Common myeloid progenitor, CD34-positive (primary cell): ENCODE measurements at regions of chr2 and their contacts with region 1.

Region 1: DNA sequence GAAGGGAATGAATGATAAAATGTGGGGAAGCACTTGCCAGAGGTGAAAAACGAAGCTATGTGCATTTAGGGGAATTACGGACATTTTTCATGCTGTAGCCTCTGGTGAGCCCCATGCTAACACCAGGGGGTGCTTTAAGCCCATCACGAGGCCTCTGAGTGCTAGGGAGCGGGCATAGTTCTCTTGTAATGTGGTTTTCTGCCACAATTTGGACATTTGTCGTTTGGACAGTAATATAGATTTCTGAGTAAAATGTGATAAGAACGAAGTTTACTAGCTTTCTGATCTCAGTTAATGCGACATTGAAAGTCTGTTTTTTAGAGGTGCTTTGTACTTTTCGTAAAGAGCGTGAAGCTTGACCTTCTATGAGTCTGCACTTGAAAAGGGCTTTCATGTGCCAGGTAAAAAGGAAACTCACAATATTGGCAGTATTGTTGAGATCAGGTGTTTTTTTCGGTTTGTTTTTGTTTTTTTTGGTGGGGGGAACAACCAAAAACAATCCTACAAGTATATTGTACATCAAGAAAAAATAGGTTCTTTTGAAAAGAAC is 50.6 kb downstream of the TRAF3IP1 start:
- DNase-seq: peak; percentile 65 to 87 (median 84)
- H3K4me3 ChIP-seq: no peak overlapping the region
- H3K27ac ChIP-seq: no peak overlapping the region
- H3K4me1 ChIP-seq: peaks cover 0 to 20% (median 0%) of the 10 kb centered on the region in 4 experiments
- H3K27me3 ChIP-seq: no peaks in the 10 kb centered on the region

Region 2: DNA sequence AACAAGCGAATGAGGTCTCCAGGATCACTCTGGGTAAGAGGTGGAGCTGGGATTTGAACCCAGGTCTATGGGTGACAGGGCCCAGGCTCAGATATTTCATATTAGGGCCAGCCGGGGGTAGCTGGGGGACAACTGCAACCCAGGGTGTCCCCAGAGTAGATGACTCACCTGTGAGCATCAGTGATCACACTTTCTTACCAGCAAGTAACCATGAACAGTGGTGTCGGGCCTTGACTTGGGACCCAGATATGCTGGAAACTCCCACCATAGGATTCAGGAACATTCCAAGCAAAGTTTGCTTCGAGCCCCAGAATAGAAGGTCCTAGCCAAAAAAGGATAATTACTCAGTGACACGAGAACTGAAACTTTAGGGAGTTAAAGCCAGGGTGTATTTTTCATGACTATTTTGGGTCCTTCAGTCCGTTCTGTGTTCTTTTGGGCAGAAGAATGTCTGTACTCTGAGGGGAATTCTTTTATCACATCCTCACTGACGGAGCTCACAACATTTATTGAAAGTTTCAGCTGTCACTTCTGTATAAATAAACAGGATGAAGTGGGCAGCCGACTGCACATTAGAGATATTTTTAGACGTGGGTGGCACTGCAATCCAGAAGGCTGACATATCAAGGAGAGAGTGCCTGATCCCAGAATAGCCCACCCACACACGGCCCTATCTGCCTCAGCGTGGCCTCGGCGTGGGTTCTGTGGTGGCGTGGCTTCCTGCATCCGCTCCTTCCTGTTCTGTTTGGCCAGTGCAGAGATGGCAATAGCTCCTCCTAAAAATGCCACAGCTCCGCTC is 465.9 kb before region 1 on chr2:
- CTCF ChIA-PET with region 1: no interaction called
- POLR2A ChIA-PET with region 1: no interaction called
- DNase-seq: peak; percentile 42 to 85 (median 76)
- H3K4me3 ChIP-seq: peak overlapping the region in 1 of 7 experiments; percentile 48
- H3K27ac ChIP-seq: peak overlapping the region; percentile 52 to 64
- H3K4me1 ChIP-seq: peaks cover 5 to 52% (median 35%) of the 10 kb centered on the region in 4 experiments
- H3K27me3 ChIP-seq: no peaks in the 10 kb centered on the region

Region 3: GRCh38 chr2:238433941-238434845 is 63.3 kb after region 1 on chr2:
- CTCF ChIA-PET with region 1: interaction called, 14 read pairs
- POLR2A ChIA-PET with region 1: interaction called, 3 read pairs
- DNase-seq: no peak
- H3K4me3 ChIP-seq: no peak overlapping the region
- H3K27ac ChIP-seq: no peak overlapping the region
- H3K4me1 ChIP-seq: no peaks in the 10 kb centered on the region
- H3K27me3 ChIP-seq: no peaks in the 10 kb centered on the region

Region 4: GRCh38 chr2:238462782-238463396 is 92.0 kb after region 1 on chr2:
- CTCF ChIA-PET with region 1: interaction called, 37 read pairs
- POLR2A ChIA-PET with region 1: interaction called, 4 read pairs
- DNase-seq: peak; percentile 50 to 75 (median 74)
- H3K4me3 ChIP-seq: no peak overlapping the region
- H3K27ac ChIP-seq: no peak overlapping the region
- H3K4me1 ChIP-seq: no peaks in the 10 kb centered on the region
- H3K27me3 ChIP-seq: peaks cover 0 to 6% (median 0%) of the 10 kb centered on the region in 5 experiments

Region 5: GRCh38 chr2:238585836-238586821 is 215.2 kb after region 1 on chr2:
- CTCF ChIA-PET with region 1: no interaction called
- POLR2A ChIA-PET with region 1: no interaction called
- DNase-seq: peak in 2 of 3 donors; percentile 4 to 16
- H3K4me3 ChIP-seq: no peak overlapping the region
- H3K27ac ChIP-seq: no peak overlapping the region
- H3K4me1 ChIP-seq: no peaks in the 10 kb centered on the region
- H3K27me3 ChIP-seq: peaks cover 0 to 2% (median 0%) of the 10 kb centered on the region in 5 experiments

Region 6: DNA sequence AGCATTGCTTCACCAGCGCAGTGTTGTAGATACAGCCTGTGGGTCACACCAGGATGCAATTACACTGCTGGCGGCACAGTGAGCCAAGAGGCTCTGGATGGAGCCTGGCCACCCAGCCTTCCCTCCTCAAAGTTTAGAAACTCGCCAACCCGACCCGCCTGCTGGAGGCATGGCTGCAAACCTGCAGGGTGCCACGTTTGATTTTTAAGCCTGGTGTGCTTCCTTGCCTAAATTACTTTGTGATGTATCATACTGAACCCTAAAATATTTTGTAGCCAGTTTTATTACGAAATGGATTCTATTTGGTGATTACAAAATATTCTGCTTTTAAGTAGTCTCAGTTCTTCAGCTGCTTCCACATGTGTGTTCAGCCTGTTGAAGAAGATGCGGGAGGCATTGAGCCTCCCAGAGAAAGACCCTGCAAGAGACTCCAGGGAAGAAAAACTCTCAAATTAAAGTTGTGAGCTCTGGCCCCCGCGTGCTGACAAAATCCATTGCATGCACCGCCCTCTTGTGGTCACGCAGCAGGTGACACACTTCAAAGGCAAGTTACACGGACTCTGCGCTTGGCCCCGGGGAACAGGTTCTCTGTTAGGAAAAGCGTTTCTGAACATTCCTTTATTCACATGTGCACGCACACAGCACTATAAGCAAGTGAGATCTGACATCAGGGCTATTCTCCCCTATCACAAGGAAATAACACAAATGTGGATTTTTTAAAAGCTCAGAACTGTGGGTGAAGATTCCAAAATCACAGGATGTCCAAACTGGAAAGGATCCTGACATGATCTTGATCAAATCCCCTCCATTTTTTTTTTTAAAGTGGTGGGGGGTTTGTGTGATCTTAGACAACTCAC is 414.0 kb after region 1 on chr2:
- CTCF ChIA-PET with region 1: interaction called, 11 read pairs
- POLR2A ChIA-PET with region 1: no interaction called
- DNase-seq: peak; percentile 57 to 76 (median 67)
- H3K4me3 ChIP-seq: no peak overlapping the region
- H3K27ac ChIP-seq: no peak overlapping the region
- H3K4me1 ChIP-seq: no peaks in the 10 kb centered on the region
- H3K27me3 ChIP-seq: peaks cover 0 to 8% (median 7%) of the 10 kb centered on the region in 5 experiments